Tibial artery (tissue), 4 donors: ENCODE measurements at regions of chr7 and their contacts with region 1.

Region 1: GRCh38 chr7:41696314-41696916 is 6.5 kb downstream of the INHBA start:
- DNase-seq: peak; percentile 86 to 91
- H3K4me3 ChIP-seq: peak overlapping the region; percentile 70 to 72
- H3K27ac ChIP-seq: peak overlapping the region; percentile 95 to 97
- H3K4me1 ChIP-seq: peaks cover 0 to 56% (median 39%) of the 10 kb centered on the region in 4 donors
- H3K27me3 ChIP-seq: no peaks in the 10 kb centered on the region
- CTCF ChIP-seq: peak; percentile 75 to 85

Region 2: GRCh38 chr7:40200791-40201190 is 1495.6 kb before region 1 on chr7:
- intact Hi-C with region 1: loop called (anchors 5 kb)
- DNase-seq: no peak
- H3K4me3 ChIP-seq: no peak overlapping the region
- H3K27ac ChIP-seq: peak overlapping the region; percentile 72 to 73
- H3K4me1 ChIP-seq: peaks cover 0 to 63% (median 8%) of the 10 kb centered on the region in 4 donors
- H3K27me3 ChIP-seq: no peaks in the 10 kb centered on the region
- CTCF ChIP-seq: no peak

Region 3: DNA sequence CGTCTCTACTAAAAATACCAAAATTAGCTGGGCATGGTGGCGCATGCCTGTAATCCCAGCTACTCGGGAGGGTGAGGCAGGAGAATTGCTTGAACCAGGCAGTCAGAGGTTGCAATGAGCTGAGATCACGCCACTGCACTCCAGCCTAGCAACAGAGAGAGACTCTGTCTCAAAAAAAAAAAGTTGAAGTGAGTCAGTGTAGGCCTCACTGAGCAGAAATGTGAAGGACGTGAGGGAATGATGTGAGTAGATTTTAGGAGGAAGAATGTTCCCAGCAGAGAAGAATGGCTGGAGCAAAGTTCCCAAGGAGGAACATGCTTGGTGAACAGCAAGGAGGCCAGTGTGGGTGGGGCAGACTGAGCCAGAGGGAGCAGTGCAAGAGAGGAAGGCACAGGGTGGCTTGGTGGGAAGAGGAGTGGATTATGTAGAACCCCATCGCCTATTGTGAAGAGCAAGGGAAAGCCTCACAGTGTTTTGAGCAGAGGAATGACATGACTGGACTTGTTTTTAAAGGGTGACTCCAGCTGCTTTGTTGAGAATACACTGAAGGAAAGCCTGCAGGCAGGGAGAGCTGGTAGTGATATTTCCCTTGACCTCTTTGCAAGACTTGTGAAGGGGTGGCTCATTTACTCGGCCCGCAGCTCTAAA is 853.0 kb before region 1 on chr7:
- intact Hi-C with region 1: loop called (anchors 10 kb)
- DNase-seq: no peak
- H3K4me3 ChIP-seq: no peak overlapping the region
- H3K27ac ChIP-seq: peak overlapping the region; percentile 37 to 66
- H3K4me1 ChIP-seq: peaks cover 0 to 42% (median 5%) of the 10 kb centered on the region in 4 donors
- H3K27me3 ChIP-seq: no peaks in the 10 kb centered on the region
- CTCF ChIP-seq: no peak

Region 4: GRCh38 chr7:41472427-41473125 is 223.8 kb before region 1 on chr7:
- intact Hi-C with region 1: no loop called
- DNase-seq: no peak
- H3K4me3 ChIP-seq: peak overlapping the region in 1 of 2 donors; percentile 22
- H3K27ac ChIP-seq: peak overlapping the region; percentile 34 to 44
- H3K4me1 ChIP-seq: peaks cover 0 to 28% (median 8%) of the 10 kb centered on the region in 4 donors
- H3K27me3 ChIP-seq: no peaks in the 10 kb centered on the region
- CTCF ChIP-seq: no peak